MCF 10A (cell line): ENCODE measurements at regions of chrX and their contacts with region 1.

Region 1: DNA sequence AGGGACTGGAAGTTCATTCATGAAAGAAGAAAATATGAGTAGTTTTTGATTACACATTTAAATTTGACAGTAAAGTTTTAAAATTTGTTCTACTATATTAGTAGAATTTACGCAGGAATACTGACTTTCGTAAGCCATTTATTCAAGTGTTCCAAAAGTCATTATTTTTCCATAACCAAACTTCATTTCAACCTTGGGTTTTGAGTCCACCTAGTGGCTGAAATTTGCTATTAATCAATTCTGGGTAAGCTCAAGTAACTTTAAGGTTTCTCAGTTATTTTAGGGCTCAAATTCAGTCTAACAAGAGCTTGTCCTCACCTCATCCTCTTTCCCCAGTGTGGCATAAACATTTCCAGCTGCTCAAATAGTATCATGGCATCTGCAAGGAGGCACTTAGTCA is 175.4 kb downstream of the SH3BGRL start:
- DNase-seq: peak; percentile 40
- H3K4me3 Mint-ChIP-seq: no peak overlapping the region
- H3K27ac Mint-ChIP-seq: no peak overlapping the region
- H3K4me1 Mint-ChIP-seq: no peaks in the 10 kb centered on the region
- H3K27me3 Mint-ChIP-seq: no peaks in the 10 kb centered on the region
- CTCF ChIP-seq: peak; percentile 46

Region 2: DNA sequence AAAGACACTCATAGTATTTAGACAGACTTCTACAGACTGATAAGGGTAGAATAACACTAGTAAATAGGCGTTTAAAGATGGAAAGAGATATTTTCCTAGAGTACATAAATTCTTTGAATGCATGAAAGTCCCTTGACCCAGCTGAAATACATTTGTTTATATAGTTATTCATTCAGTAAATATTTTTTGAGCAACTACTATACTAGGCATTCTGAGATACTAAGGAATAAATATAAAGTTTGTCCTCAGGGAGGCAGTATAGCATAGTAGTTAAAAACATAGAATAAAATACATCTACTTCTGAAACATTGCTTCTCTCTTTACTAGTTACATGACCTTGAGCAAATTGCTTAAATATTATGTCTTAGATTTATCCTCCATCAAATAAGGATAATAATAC is 203.0 kb before region 1 on chrX:
- CTCF ChIA-PET with region 1: interaction called, 28 read pairs
- POLR2A ChIA-PET with region 1: no interaction called
- intact Hi-C with region 1: loop called (anchors 1 kb)
- DNase-seq: peak; percentile 30
- H3K4me3 Mint-ChIP-seq: no peak overlapping the region
- H3K27ac Mint-ChIP-seq: no peak overlapping the region
- H3K4me1 Mint-ChIP-seq: no peaks in the 10 kb centered on the region
- H3K27me3 Mint-ChIP-seq: no peaks in the 10 kb centered on the region
- CTCF ChIP-seq: peak; percentile 33

Region 3: DNA sequence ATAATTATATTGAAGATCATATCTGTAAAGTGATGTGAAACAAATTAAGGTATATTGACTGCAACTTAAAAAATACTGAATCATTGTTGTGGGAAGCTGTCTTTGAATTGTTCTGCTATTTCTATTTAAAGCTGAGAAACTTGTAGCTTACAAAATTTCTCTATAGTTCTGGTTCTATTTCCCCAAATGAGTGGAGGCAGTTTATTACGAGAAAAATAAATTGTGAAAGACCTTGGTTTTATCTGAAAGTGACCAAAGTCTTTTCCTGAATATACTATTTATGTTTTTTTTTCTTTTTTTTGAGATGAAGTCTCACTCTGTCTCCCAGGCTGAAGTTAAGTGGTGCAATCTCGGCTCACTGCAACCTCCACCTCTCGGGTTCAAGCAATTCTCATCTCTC is 10.0 kb before region 1 on chrX:
- CTCF ChIA-PET with region 1: interaction called, 18 read pairs
- POLR2A ChIA-PET with region 1: interaction called, 3 read pairs
- intact Hi-C with region 1: no loop called
- DNase-seq: no peak
- H3K4me3 Mint-ChIP-seq: no peak overlapping the region
- H3K27ac Mint-ChIP-seq: no peak overlapping the region
- H3K4me1 Mint-ChIP-seq: no peaks in the 10 kb centered on the region
- H3K27me3 Mint-ChIP-seq: no peaks in the 10 kb centered on the region
- CTCF ChIP-seq: no peak

Region 4: DNA sequence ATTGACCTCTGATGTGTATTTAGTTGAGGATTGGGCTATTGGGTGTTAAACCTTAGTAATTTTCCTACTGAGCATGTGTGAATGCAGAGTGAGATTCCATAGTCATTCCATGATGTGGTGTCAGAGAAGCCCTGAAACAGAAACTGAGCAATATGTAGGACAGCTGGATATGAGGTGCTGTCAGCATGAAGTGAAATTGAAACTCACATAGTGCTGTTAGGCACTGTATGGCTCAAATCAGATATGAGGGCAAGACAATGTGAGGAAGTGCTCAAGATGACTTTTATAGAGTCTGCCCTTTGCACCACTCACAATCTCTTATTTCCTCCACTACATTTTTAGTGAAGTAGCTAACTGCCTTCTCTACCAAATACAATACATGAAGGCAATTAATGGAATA is 12.9 kb after region 1 on chrX:
- CTCF ChIA-PET with region 1: interaction called, 11 read pairs
- POLR2A ChIA-PET with region 1: no interaction called
- intact Hi-C with region 1: no loop called
- DNase-seq: no peak
- H3K4me3 Mint-ChIP-seq: no peak overlapping the region
- H3K27ac Mint-ChIP-seq: no peak overlapping the region
- H3K4me1 Mint-ChIP-seq: no peaks in the 10 kb centered on the region
- H3K27me3 Mint-ChIP-seq: no peaks in the 10 kb centered on the region
- CTCF ChIP-seq: no peak